A673 (cell line): ENCODE measurements at regions of chr18 and their contacts with region 1.

Region 1: DNA sequence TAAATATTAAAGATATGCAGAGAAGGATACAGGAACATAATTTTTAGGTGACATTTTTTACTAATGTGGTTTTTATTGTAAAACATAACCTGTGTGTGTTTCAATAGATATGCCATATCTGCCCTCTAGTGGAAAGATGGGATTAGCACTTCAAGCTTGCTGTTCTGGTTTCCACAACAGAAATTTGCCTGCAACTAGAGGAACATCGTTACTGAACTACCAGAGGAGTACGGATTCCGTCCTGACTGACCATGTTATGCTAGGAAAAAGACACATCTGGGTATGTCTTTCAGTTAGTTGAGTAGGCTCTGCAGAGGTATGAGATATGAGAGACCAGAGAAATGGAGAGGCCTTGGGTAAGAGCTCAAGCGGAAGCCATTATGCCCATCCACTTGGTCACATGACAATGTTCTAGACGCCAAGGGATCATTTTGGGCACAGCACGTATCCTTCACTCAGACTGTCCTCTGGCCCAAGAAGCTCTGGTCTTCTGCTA is 104.9 kb downstream of the MBD2 start:
- DNase-seq: peak; percentile 71
- H3K4me3 ChIP-seq: peak overlapping the region; percentile 33
- H3K27ac ChIP-seq: no peak overlapping the region
- H3K4me1 ChIP-seq: peaks cover 5% of the 10 kb centered on the region
- H3K27me3 ChIP-seq: no peaks in the 10 kb centered on the region
- CTCF ChIP-seq: peak; percentile 91

Region 2: DNA sequence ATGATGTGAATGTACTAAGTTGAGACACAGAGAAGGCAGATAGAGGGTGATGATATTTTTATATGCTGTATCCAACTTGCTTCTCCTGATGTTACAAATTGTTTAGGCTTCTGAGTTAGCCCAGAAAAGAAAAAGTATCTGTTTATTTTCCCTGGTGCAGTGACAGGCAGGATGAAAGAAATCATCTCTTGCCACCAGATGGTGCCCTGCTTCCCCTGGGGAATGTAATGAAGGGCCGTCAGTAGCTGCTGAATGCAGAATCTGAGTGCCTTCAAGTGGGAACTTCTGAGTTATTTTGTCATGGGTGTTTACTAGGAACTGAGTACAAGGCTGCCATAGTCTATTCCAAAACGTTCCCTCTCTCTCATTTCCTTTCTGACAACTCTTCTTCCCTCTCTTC is 420.7 kb before region 1 on chr18:
- CTCF ChIA-PET with region 1: interaction called, 21 read pairs
- POLR2A ChIA-PET with region 1: no interaction called
- intact Hi-C with region 1: loop called (anchors 2 kb)
- DNase-seq: peak; percentile 69
- H3K4me3 ChIP-seq: no peak overlapping the region
- H3K27ac ChIP-seq: no peak overlapping the region
- H3K4me1 ChIP-seq: no peaks in the 10 kb centered on the region
- H3K27me3 ChIP-seq: no peaks in the 10 kb centered on the region
- CTCF ChIP-seq: peak; percentile 78

Region 3: GRCh38 chr18:53909668-53910067 is 209.9 kb before region 1 on chr18:
- CTCF ChIA-PET with region 1: no interaction called
- POLR2A ChIA-PET with region 1: no interaction called
- intact Hi-C with region 1: loop called (anchors 2 kb)
- DNase-seq: peak; percentile 55
- H3K4me3 ChIP-seq: no peak overlapping the region
- H3K27ac ChIP-seq: no peak overlapping the region
- H3K4me1 ChIP-seq: no peaks in the 10 kb centered on the region
- H3K27me3 ChIP-seq: no peaks in the 10 kb centered on the region
- CTCF ChIP-seq: peak; percentile 69

Region 4: DNA sequence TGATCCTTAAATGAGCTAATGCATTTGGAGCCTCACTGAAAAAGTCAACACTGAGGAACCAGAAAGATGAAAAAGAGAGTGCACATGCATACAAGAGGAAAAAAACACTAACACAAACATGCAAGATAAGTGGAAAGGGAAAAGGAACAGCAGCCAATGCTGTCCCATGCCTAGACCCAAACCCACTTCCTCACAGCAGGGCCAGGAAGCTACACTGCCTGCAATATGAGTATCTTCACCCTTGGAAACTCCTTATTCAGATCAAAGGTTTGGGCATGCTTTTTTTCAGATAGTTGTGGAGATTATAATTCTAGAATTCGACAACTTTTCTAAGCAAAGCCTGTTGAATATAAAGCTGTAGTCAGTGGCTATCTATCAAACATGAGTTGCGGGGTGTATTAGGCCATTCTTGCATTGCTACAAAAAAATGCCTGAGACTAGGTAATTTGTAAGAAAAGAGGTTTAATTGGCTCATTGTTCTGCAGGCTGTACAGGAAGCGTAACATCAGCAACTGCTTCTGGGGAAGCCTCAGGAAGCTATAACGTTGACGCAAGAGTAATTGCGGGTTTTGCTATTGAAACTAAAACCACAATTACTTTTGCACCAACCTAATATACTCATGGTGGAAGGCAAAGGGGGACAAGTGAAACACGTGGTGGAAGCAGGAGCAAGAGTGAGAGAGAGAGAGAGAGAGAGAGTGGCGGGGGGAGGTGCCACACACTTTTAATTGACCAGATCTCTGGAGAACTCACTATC is 33.3 kb before region 1 on chr18:
- CTCF ChIA-PET with region 1: no interaction called
- POLR2A ChIA-PET with region 1: no interaction called
- intact Hi-C with region 1: no loop called
- DNase-seq: peak; percentile 57
- H3K4me3 ChIP-seq: no peak overlapping the region
- H3K27ac ChIP-seq: peak overlapping the region; percentile 18
- H3K4me1 ChIP-seq: peaks cover 16% of the 10 kb centered on the region
- H3K27me3 ChIP-seq: no peaks in the 10 kb centered on the region
- CTCF ChIP-seq: no peak

Region 5: GRCh38 chr18:54284981-54285785 is 165.6 kb after region 1 on chr18:
- CTCF ChIA-PET with region 1: no interaction called
- POLR2A ChIA-PET with region 1: no interaction called
- intact Hi-C with region 1: no loop called
- DNase-seq: peak; percentile 7
- H3K4me3 ChIP-seq: no peak overlapping the region
- H3K27ac ChIP-seq: no peak overlapping the region
- H3K4me1 ChIP-seq: no peaks in the 10 kb centered on the region
- H3K27me3 ChIP-seq: no peaks in the 10 kb centered on the region
- CTCF ChIP-seq: no peak